Heart right ventricle (tissue), 16 donors: ENCODE measurements at regions of chr13 and their contacts with region 1.

Region 1: DNA sequence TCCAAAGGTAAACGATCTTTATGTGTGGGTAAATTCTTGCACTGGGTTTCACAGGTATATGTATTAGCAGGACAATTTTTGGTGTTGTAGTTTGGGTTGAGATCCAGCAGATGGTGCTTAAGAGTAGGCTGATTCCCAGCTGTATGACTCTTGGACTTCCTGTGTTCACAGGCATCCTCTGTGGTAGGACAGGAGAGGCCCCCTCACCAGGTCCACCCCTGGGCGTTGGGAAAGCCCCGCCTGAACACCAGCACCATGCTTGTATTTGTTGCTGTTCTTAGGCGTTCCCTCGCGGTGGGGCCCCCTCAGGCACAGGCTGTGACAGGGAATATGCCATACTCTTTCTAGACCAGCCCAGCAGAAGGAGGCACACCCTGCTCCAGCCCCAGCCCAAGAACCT is 49.5 kb upstream of the PCDH17 start:
- DNase-seq: no peak
- ATAC-seq: no peak
- H3K4me3 ChIP-seq: no peak overlapping the region
- H3K27ac ChIP-seq: no peak overlapping the region
- H3K4me1 ChIP-seq: no peaks in the 10 kb centered on the region
- H3K27me3 ChIP-seq: peaks cover 0 to 4% (median 0%) of the 10 kb centered on the region in 7 donors
- CTCF ChIP-seq: no peak

Region 2: GRCh38 chr13:57595775-57596174 is 13.7 kb after region 1 on chr13:
- intact Hi-C with region 1: loop called in 1 of 10 experiments (anchors 2 kb)
- DNase-seq: no peak
- ATAC-seq: no peak
- H3K4me3 ChIP-seq: no peak overlapping the region
- H3K27ac ChIP-seq: no peak overlapping the region
- H3K4me1 ChIP-seq: no peaks in the 10 kb centered on the region
- H3K27me3 ChIP-seq: no peaks in the 10 kb centered on the region
- CTCF ChIP-seq: no peak